ENCODE measurements at regions of chr10 and their contacts with region 1.

Region 1: DNA sequence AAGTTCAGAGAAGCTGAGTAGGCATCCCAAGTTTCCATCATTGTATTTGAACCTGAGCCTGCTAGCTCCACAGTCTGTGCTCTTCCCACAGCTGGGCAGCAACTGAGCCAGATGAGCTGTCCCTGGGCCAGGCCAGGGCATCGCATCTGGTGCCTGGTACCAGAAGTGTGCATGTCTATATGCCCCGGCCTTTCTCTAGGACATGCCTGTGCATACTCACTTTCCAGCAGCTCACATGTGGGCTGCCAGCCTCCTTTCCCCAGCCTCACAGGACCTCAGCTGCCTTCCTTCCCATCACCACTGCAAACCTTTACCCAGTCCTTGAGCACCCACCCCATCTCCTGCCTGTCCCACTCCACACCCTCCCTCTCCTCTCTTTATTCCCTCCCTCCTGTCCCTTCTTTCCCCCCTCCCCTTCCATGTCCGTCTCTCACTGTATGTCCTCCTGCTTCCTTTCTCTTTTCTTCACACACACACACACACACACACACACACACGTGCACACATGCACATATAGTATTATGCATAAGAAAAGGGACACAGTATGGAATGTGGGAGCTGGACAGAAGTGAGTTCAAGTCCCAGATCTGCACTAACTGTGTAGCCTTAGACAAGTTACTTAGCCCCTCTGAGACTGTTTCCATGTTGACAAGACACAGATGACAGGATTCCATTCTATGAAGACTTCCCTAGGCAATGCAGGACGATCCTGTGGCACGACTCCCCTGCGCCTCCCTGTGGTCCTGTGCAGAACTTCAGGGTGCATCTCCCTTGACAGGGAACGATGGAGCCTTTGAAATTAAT is 10.9 kb downstream of the CDHR1 start:
- DNase-seq: peak; percentile 57 to 81 (median 65)
- H3K4me3 ChIP-seq: no peak overlapping the region
- H3K4me3 Mint-ChIP-seq: no peak overlapping the region
- H3K27ac ChIP-seq: no peak overlapping the region
- H3K27ac Mint-ChIP-seq: peak overlapping the region in 2 of 8 donors; percentile 16 to 72
- H3K4me1 ChIP-seq: no peaks in the 10 kb centered on the region
- H3K4me1 Mint-ChIP-seq: peaks cover 0 to 4% (median 2%) of the 10 kb centered on the region in 3 donors
- H3K27me3 ChIP-seq: no peaks in the 10 kb centered on the region
- H3K27me3 Mint-ChIP-seq: peaks cover 2 to 4% of the 10 kb centered on the region in 2 donors

Region 2: GRCh38 chr10:84114088-84114667 is 91.1 kb before region 1 on chr10:
- CTCF ChIA-PET with region 1: no interaction called
- POLR2A ChIA-PET with region 1: no interaction called
- DNase-seq: no peak
- H3K4me3 ChIP-seq: no peak overlapping the region
- H3K4me3 Mint-ChIP-seq: no peak overlapping the region
- H3K27ac ChIP-seq: no peak overlapping the region
- H3K27ac Mint-ChIP-seq: no peak overlapping the region
- H3K4me1 ChIP-seq: no peaks in the 10 kb centered on the region
- H3K4me1 Mint-ChIP-seq: no peaks in the 10 kb centered on the region
- H3K27me3 ChIP-seq: no peaks in the 10 kb centered on the region
- H3K27me3 Mint-ChIP-seq: peaks cover 18 to 37% of the 10 kb centered on the region in 2 donors

Region 3: DNA sequence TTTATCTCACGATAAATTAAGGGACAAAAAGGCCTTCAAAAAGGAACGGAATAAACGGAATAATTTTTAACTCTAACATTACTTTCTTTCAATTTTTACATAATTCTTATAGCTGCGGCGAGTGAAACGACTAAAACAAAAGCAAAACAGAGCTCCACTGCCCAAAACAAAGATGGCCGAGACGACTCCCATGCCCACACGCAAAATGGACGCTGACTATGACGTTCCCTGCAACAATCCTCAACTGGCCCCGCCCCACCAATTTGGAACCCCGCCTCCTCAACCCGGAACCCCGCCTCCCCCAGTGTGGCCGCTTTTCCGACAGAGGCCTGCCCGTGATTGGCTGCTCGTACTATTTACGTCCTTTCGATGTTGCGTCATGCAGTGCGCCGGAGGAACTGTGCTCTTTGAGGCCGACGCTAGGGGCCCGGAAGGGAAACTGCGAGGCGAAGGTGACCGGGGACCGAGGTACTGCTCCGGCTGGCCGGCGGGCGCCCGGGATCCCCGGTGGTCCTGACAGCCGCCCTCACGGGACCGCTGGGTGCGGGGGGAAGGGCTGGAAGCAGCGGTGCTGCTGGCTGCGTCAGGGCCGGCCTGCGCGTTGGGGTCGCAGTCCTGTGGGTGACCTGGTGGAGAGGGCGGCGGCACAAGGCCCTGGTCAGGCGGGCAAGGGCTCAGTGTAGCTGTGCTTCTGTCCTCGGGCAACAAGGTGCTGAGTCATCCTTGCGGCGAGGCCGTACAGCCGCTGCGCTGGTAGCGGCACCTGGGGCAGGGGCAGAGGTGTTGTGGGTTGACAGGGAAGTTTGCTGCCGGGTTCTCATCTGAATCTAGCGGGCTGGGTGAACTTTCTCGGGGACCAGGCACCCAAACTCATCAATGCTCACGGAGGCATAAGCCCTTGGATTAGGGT is 65.9 kb before region 1 on chr10 and contains the start of gene GHITM:
- CTCF ChIA-PET with region 1: interaction called, 34 read pairs
- POLR2A ChIA-PET with region 1: no interaction called
- DNase-seq: peak; percentile 98 to 100 (median 99)
- H3K4me3 ChIP-seq: peak within 1 kb of the TSS; percentile 96
- H3K4me3 Mint-ChIP-seq: peak within 1 kb of the TSS; percentile 87 to 98 (median 95)
- H3K27ac ChIP-seq: peak within 1 kb of the TSS; percentile 99
- H3K27ac Mint-ChIP-seq: peak within 1 kb of the TSS; percentile 97 to 100 (median 99)
- H3K4me1 ChIP-seq: peaks cover 18% of the 10 kb centered on the region
- H3K4me1 Mint-ChIP-seq: peaks cover 27 to 44% (median 32%) of the 10 kb centered on the region in 3 donors
- H3K27me3 ChIP-seq: no peaks in the 10 kb centered on the region
- H3K27me3 Mint-ChIP-seq: peaks cover 0 to 3% of the 10 kb centered on the region in 2 donors
- total RNA-seq, gene GHITM: 218 TPM

Region 4: GRCh38 chr10:84194424-84195040 is 10.7 kb before region 1 on chr10 and contains the start of gene CDHR1:
- CTCF ChIA-PET with region 1: interaction called, 10 read pairs
- POLR2A ChIA-PET with region 1: no interaction called
- DNase-seq: peak; percentile 31 to 68 (median 56)
- H3K4me3 ChIP-seq: peak within 1 kb of the TSS; percentile 43
- H3K4me3 Mint-ChIP-seq: peak within 1 kb of the TSS; percentile 71 to 90 (median 74)
- H3K27ac ChIP-seq: no peak within 1 kb of the TSS
- H3K27ac Mint-ChIP-seq: peak within 1 kb of the TSS in 6 of 8 donors; percentile 19 to 74 (median 56)
- H3K4me1 ChIP-seq: peaks cover 28% of the 10 kb centered on the region
- H3K4me1 Mint-ChIP-seq: peaks cover 14 to 37% (median 25%) of the 10 kb centered on the region in 3 donors
- H3K27me3 ChIP-seq: peaks cover 19% of the 10 kb centered on the region
- H3K27me3 Mint-ChIP-seq: peaks cover 5 to 9% of the 10 kb centered on the region in 2 donors
- total RNA-seq, gene CDHR1: 1.4 to 1.7 TPM

Region 5: DNA sequence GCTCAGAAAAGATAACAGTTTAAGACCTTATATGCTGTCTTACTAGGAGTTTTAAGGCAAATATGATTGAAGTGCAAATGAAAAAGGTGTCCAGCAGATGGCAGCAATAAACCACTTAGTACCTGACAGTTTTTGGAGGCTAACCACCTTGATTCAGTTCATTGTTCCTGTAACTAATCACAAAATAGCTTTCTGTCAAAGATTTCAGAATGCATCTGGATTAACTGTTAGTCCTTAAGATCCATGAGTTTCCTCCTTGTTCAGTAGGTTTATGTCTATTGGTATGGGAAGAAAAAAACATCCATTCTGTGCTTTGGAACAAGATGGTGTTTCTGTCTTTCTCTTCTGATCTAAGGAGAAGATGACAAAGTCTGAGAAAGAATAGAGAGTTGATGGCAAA is 169.8 kb after region 1 on chr10:
- CTCF ChIA-PET with region 1: no interaction called
- POLR2A ChIA-PET with region 1: no interaction called
- DNase-seq: peak in 4 of 5 donors; percentile 6 to 44 (median 42)
- H3K4me3 ChIP-seq: no peak overlapping the region
- H3K4me3 Mint-ChIP-seq: peak overlapping the region in 1 of 7 donors; percentile 16
- H3K27ac ChIP-seq: no peak overlapping the region
- H3K27ac Mint-ChIP-seq: peak overlapping the region; percentile 12 to 82 (median 57)
- H3K4me1 ChIP-seq: no peaks in the 10 kb centered on the region
- H3K4me1 Mint-ChIP-seq: peaks cover 48 to 82% (median 69%) of the 10 kb centered on the region in 3 donors
- H3K27me3 ChIP-seq: no peaks in the 10 kb centered on the region
- H3K27me3 Mint-ChIP-seq: no peaks in the 10 kb centered on the region

Region 6: DNA sequence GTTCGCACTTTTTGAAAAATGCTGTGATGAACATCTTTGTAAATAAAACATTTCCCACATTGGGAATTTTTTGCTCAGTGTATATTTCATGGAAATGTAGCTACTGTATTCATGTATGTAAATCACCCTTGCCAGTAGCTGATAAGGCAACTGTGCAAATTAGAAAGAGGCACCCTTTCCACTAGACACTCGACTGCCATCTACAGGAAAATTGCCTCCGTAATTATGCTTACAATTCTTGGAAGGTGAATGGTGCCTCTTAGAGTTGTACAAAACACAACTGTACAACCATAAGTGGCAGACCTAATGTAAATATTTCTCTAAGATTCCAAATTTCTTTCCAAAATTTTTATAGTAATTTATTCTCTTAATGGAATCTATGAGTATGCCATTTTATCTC is 614.9 kb after region 1 on chr10:
- CTCF ChIA-PET with region 1: no interaction called
- POLR2A ChIA-PET with region 1: no interaction called
- DNase-seq: no peak
- H3K4me3 ChIP-seq: no peak overlapping the region
- H3K4me3 Mint-ChIP-seq: no peak overlapping the region
- H3K27ac ChIP-seq: no peak overlapping the region
- H3K27ac Mint-ChIP-seq: no peak overlapping the region
- H3K4me1 ChIP-seq: no peaks in the 10 kb centered on the region
- H3K4me1 Mint-ChIP-seq: no peaks in the 10 kb centered on the region
- H3K27me3 ChIP-seq: no peaks in the 10 kb centered on the region
- H3K27me3 Mint-ChIP-seq: peaks cover 3 to 4% of the 10 kb centered on the region in 2 donors